ENCODE measurements at regions of chr1 and their contacts with region 1.

Region 1: DNA sequence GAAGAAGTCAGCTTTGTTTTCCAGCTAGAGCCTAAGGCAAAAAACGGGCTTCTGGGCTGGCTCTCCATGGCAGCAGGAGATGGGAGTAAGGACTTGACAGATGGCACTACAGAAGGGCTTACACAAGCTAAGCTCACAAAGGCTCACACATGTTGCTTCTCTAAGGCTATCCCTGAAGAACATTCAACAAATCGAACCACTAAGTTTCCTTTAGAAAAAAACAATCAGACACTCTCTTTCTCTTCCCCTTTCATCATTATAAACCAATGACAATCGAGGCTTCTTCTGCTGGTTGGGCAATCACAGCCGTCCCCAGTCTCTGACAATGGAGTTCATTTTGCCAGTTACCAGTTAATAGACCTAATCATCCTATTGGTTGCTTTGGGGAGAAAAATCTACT is 40.5 kb downstream of the TRIT1 start:
- DNase-seq: no peak
- ATAC-seq: no peak
- H3K4me3 ChIP-seq: no peak overlapping the region
- H3K27ac ChIP-seq: no peak overlapping the region
- H3K4me1 ChIP-seq: peaks cover 18% of the 10 kb centered on the region
- H3K27me3 ChIP-seq: no peaks in the 10 kb centered on the region
- CTCF ChIP-seq: no peak

Region 2: GRCh38 chr1:39876144-39876543 is 33.3 kb after region 1 on chr1:
- intact Hi-C with region 1: loop called in 1 of 2 experiments (anchors 5 kb)
- DNase-seq: no peak
- ATAC-seq: no peak
- H3K4me3 ChIP-seq: no peak overlapping the region
- H3K27ac ChIP-seq: no peak overlapping the region
- H3K4me1 ChIP-seq: peaks cover 34% of the 10 kb centered on the region
- H3K27me3 ChIP-seq: no peaks in the 10 kb centered on the region
- CTCF ChIP-seq: no peak

Region 3: GRCh38 chr1:40096977-40097782 is 254.3 kb after region 1 on chr1 and contains the start of gene PPT1:
- intact Hi-C with region 1: no loop called
- DNase-seq: peak; percentile 79 to 86
- ATAC-seq: peak; percentile 94 to 100 (median 97)
- H3K4me3 ChIP-seq: peak within 1 kb of the TSS; percentile 91
- H3K27ac ChIP-seq: peak within 1 kb of the TSS; percentile 71
- H3K4me1 ChIP-seq: peaks cover 12% of the 10 kb centered on the region
- H3K27me3 ChIP-seq: no peaks in the 10 kb centered on the region
- CTCF ChIP-seq: no peak
- total RNA-seq, gene PPT1: 14.9 to 20.8 (median 19.1) TPM